Activated CD4-positive, alpha-beta T cell treated with anti-CD3 and anti-CD28 coated beads, Interleukin-2, amount 10 ng/mL, durations not matched to agents 24 days and 14 days (primary cell): ENCODE measurements at regions of chr18 and their contacts with region 1.

Region 1: DNA sequence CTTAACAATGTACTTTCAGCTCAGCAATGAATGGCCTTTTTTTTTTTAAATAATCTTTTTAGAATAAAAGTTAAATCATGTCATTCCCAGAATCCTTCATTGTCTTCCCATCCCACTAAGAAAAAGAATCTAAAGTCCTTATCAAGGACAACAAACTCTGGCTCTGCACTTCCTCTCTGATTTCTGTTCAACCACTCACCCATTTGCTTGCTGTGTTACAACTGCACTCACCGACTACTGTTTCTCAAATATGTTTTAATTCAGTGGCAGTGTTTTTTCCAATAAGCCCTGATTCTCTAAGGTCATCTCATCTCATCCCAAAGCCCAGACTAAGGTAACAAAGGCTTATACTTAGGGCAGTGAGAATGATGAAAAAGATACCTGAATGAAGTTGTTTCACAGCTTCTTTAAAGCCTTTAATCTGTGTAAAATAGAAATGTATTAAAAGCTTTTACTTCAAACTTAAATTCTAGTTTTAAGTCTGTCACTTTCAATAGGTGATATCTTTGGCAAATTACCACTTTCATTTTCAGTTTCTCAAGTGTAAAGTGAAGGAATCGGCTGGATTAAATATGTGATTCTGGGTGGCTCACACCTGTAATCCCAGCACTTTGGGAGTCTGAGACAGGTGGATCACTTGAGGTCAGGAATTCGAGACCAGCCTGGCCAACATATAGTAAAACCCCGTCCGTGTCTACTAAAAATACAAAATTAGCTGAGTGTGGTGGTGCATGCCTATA is 87.6 kb downstream of the RBBP8 start:
- DNase-seq: peak; percentile 61
- H3K4me3 Mint-ChIP-seq: peak overlapping the region; percentile 71
- H3K27ac Mint-ChIP-seq: peak overlapping the region; percentile 81
- H3K4me1 Mint-ChIP-seq: peaks cover 12% of the 10 kb centered on the region
- H3K27me3 Mint-ChIP-seq: no peaks in the 10 kb centered on the region

Region 2: DNA sequence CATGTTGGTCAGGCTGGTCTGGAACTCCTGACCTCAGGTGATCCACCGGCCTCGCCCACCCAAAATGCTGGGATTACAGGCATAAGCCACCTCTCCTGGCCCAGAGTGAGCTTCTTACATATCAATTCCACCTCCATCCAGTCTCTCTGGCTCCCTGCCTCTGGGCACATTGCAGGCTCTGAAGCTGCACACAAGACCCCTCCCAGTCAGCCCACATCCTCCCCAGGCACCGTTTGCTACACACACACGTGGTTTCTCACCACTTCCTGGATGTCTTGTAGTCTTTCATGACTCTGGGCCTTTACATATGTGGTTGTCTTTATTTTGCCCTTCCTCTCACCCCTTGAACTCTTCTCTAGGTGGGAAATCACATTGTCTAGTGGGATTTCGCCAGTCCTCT is 50.6 kb after region 1 on chr18:
- intact Hi-C with region 1: loop called (anchors 5 kb)
- DNase-seq: peak; percentile 96
- H3K4me3 Mint-ChIP-seq: peak overlapping the region; percentile 66
- H3K27ac Mint-ChIP-seq: peak overlapping the region; percentile 95
- H3K4me1 Mint-ChIP-seq: peaks cover 53% of the 10 kb centered on the region
- H3K27me3 Mint-ChIP-seq: no peaks in the 10 kb centered on the region

Region 3: DNA sequence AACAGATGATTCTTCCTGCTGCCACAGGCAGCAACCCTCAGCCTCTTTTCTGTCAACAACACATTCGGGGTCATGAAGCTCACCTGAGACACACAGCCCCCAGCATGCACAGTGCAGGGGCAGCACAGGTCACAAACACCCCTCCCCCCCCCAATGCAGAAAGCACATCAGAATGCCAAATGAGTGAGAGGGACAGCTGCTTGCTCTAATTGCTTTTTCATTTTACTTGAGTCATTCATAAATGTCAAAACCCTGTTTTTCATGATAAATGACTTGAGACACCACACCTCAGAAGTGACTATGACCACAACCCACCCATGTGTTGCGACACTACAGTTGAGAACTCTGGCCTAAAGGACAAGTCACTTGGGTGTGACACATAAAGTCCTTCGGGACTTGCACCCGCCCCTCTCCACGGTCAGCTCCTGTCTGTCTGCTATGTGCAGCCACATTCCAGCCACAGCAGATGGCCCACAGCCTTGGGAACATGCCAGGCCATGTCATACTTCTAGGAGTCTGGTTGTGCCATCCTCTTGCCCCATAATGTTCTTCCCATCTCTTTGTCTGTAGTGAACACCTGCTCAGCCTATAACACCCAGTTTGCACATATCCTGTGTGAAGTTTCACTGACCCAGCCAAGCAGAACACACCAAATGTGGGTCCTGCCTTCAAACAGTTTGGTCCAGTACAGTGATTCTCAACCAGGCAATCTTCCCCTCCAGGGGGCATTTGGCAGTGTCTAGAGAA is 402.1 kb after region 1 on chr18:
- intact Hi-C with region 1: no loop called
- DNase-seq: no peak
- H3K4me3 Mint-ChIP-seq: no peak overlapping the region
- H3K27ac Mint-ChIP-seq: no peak overlapping the region
- H3K4me1 Mint-ChIP-seq: peaks cover 3% of the 10 kb centered on the region
- H3K27me3 Mint-ChIP-seq: no peaks in the 10 kb centered on the region